Ascending aorta (tissue), 2 donors: ENCODE measurements at regions of chr3 and their contacts with region 1.

Region 1: GRCh38 chr3:42780892-42781700 is 8.0 kb upstream of the CCDC13 start:
- DNase-seq: no peak
- H3K4me3 ChIP-seq: no peak overlapping the region
- H3K27ac ChIP-seq: peak overlapping the region in 1 of 2 donors; percentile 72
- H3K4me1 ChIP-seq: peaks cover 3 to 13% of the 10 kb centered on the region in 2 donors
- H3K27me3 ChIP-seq: no peaks in the 10 kb centered on the region
- CTCF ChIP-seq: peak; percentile 61 to 80 (median 80)

Region 2: DNA sequence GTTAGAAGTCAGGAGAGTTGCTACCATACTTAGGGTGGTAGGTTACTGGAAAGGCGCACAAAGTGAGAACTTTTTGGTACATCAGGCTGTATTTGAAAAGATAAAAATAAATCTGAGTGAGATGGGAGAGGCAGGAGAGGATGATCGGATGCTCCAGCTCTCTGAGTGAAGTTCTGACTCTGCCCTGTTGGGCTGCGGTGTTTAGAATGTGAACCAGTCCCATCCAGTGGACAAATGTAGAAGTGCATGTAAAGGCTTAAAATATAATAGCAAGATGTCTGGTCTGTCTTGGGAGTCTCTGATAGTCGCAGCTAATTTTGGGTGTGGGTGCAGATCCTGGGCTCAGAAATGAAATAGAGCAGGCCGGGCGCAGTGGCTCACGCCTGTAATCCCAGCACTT is 58.5 kb after region 1 on chr3:
- intact Hi-C with region 1: loop called (anchors 2 kb)
- DNase-seq: no peak
- H3K4me3 ChIP-seq: peak overlapping the region; percentile 25 to 35
- H3K27ac ChIP-seq: peak overlapping the region in 1 of 2 donors; percentile 12
- H3K4me1 ChIP-seq: peaks cover 2 to 22% of the 10 kb centered on the region in 2 donors
- H3K27me3 ChIP-seq: no peaks in the 10 kb centered on the region
- CTCF ChIP-seq: peak; percentile 76 to 83 (median 78)

Region 3: DNA sequence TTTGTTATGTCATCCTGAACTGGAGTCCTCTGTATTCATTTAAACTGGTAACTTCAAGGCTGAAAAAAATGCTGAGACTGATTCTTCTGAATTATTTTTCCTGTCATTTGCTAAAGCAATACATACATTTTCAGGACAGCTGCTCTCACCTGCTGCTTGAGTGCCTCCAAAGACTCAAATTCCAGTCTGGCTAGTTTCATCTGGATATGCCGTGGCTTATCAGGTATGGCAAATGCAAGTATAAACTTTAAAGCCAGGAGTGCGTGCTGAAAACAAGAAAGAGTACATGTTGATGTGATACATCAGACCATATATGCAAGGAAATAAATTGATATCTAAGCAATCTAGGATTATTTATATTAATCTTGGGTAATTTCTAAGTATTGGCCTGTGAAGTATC is 651.4 kb after region 1 on chr3:
- intact Hi-C with region 1: no loop called
- DNase-seq: no peak
- H3K4me3 ChIP-seq: no peak overlapping the region
- H3K27ac ChIP-seq: no peak overlapping the region
- H3K4me1 ChIP-seq: no peaks in the 10 kb centered on the region
- H3K27me3 ChIP-seq: no peaks in the 10 kb centered on the region
- CTCF ChIP-seq: no peak